HepG2 (cell line): ENCODE measurements at regions of chr1 and their contacts with region 1.

Region 1: GRCh38 chr1:32650752-32651460 is at the start of gene RBBP4:
- DNase-seq: peak; percentile 91
- ATAC-seq: peak; percentile 95
- H3K4me3 ChIP-seq: peak within 1 kb of the TSS; percentile 76 to 98 (median 91)
- H3K27ac ChIP-seq: peak within 1 kb of the TSS; percentile 100
- H3K4me1 ChIP-seq: peaks cover 59% of the 10 kb centered on the region
- H3K27me3 ChIP-seq: no peaks in the 10 kb centered on the region; a peak in 1 of 5 replicates
- CTCF ChIP-seq: no peak
- EP300 ChIP-seq: peak in 1 of 2 experiments; percentile 14; a peak in 1 of 4 replicates
- POLR2A ChIP-seq: peak in 1 of 2 experiments; percentile 79; a peak in 2 of 4 replicates
- RAD21 ChIP-seq: no peak; the same call in 1 of the 2 replicates
- total RNA-seq, gene RBBP4: 166 and 305 TPM in 2 replicates

Region 2: GRCh38 chr1:32122151-32122550 is 528.8 kb before region 1 on chr1:
- CTCF ChIA-PET with region 1: no interaction called
- POLR2A ChIA-PET with region 1: no interaction called
- in situ Hi-C with region 1: no loop called
- intact Hi-C with region 1: no loop called
- DNase-seq: no peak
- ATAC-seq: no peak
- H3K4me3 ChIP-seq: no peak overlapping the region
- H3K27ac ChIP-seq: no peak overlapping the region
- H3K4me1 ChIP-seq: peaks cover 3% of the 10 kb centered on the region
- H3K27me3 ChIP-seq: no peaks in the 10 kb centered on the region
- CTCF ChIP-seq: no peak
- EP300 ChIP-seq: no peak
- POLR2A ChIP-seq: no peak
- RAD21 ChIP-seq: no peak

Region 3: GRCh38 chr1:32394141-32394889 is 256.6 kb before region 1 on chr1 and contains the start of gene BSDC1:
- CTCF ChIA-PET with region 1: no interaction called
- POLR2A ChIA-PET with region 1: interaction called, 10 read pairs
- in situ Hi-C with region 1: no loop called
- intact Hi-C with region 1: no loop called
- DNase-seq: peak; percentile 99
- ATAC-seq: peak; percentile 98
- H3K4me3 ChIP-seq: peak within 1 kb of the TSS; percentile 77 to 99 (median 91)
- H3K27ac ChIP-seq: peak within 1 kb of the TSS; percentile 96
- H3K4me1 ChIP-seq: peaks cover 31% of the 10 kb centered on the region
- H3K27me3 ChIP-seq: no peaks in the 10 kb centered on the region; a peak in 1 of 5 replicates
- CTCF ChIP-seq: peak; percentile 31; the same call in 1 of the 2 replicates
- EP300 ChIP-seq: no peak
- POLR2A ChIP-seq: peak; percentile 77 to 96
- RAD21 ChIP-seq: no peak; the same call in 1 of the 2 replicates
- total RNA-seq, gene BSDC1: 33.2 and 40.3 TPM in 2 replicates

Region 4: GRCh38 chr1:32496127-32496526 is 154.8 kb before region 1 on chr1:
- CTCF ChIA-PET with region 1: no interaction called
- POLR2A ChIA-PET with region 1: no interaction called
- in situ Hi-C with region 1: no loop called
- intact Hi-C with region 1: no loop called
- DNase-seq: no peak
- ATAC-seq: no peak
- H3K4me3 ChIP-seq: peak overlapping the region in 1 of 3 experiments; percentile 3; a peak in 1 of 6 replicates
- H3K27ac ChIP-seq: no peak overlapping the region
- H3K4me1 ChIP-seq: peaks cover 41% of the 10 kb centered on the region
- H3K27me3 ChIP-seq: peaks cover 1 to 9% of the 10 kb centered on the region in 2 experiments; a peak in 2 of 5 replicates
- CTCF ChIP-seq: no peak
- EP300 ChIP-seq: no peak
- POLR2A ChIP-seq: no peak
- RAD21 ChIP-seq: no peak

Region 5: DNA sequence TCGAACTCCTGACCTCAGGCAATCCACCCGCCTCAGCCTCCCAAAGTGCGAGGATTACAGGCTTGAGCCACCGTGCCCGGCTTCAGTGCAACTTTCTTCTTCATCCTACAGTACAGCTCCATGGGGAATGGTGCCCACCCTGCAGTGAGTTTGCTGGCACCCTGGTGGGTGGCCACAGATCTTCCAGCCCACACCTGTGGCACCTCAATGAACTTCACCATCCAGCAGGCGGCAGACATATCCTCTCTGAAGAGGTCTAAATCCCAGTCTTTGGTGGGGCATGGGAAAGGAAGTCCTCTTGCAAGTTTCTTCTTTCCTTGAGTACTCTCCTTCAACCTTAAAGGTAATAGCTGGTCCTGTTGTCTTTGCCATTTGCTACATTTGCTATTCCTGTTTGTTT is 129.7 kb before region 1 on chr1:
- CTCF ChIA-PET with region 1: no interaction called
- POLR2A ChIA-PET with region 1: interaction called, 5 read pairs
- in situ Hi-C with region 1: no loop called
- intact Hi-C with region 1: loop called (anchors 1 kb)
- DNase-seq: no peak
- ATAC-seq: peak; percentile 70
- H3K4me3 ChIP-seq: peak overlapping the region in 1 of 3 experiments; percentile 64; a peak in 2 of 6 replicates
- H3K27ac ChIP-seq: no peak overlapping the region
- H3K4me1 ChIP-seq: peaks cover 18% of the 10 kb centered on the region; the same call in 1 of the 2 replicates
- H3K27me3 ChIP-seq: no peaks in the 10 kb centered on the region
- CTCF ChIP-seq: 0 out of 2 replicates have a peak, but pooled peaks have one; percentile 37
- EP300 ChIP-seq: no peak
- POLR2A ChIP-seq: no peak
- RAD21 ChIP-seq: no peak

Region 6: DNA sequence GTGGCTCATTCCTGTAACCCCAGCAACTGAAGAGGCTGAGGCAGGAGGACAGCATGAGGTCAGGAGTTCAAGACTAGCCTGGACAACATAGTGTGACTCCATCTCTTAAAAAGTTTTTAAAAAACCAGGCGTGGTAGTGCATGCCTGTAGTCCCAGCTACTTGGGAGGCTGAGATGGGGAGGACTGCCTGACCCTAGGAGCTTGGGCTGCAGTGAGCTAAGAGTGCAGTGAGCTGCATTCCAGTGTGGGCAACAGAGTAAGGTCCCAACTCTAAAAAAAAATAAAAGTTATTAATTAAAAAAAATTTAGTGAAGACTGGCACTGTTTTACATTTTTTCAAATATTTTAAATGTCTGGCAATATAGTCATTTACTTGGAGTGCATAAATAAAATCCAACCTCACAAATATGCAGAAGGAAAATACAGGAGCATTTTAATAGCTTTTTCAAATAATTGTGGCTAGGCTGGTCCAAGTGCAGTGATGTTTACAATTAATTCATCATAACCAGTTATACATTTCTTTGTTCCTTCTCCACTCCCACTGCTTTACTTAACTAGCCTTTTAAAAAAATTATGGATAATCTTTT is 11.3 kb before region 1 on chr1:
- CTCF ChIA-PET with region 1: no interaction called
- POLR2A ChIA-PET with region 1: interaction called, 12 read pairs
- in situ Hi-C with region 1: no loop called
- intact Hi-C with region 1: no loop called
- DNase-seq: no peak
- ATAC-seq: no peak
- H3K4me3 ChIP-seq: no peak overlapping the region
- H3K27ac ChIP-seq: no peak overlapping the region
- H3K4me1 ChIP-seq: peaks cover 6% of the 10 kb centered on the region
- H3K27me3 ChIP-seq: no peaks in the 10 kb centered on the region; a peak in 1 of 5 replicates
- CTCF ChIP-seq: no peak
- EP300 ChIP-seq: no peak
- POLR2A ChIP-seq: no peak
- RAD21 ChIP-seq: no peak

Region 7: DNA sequence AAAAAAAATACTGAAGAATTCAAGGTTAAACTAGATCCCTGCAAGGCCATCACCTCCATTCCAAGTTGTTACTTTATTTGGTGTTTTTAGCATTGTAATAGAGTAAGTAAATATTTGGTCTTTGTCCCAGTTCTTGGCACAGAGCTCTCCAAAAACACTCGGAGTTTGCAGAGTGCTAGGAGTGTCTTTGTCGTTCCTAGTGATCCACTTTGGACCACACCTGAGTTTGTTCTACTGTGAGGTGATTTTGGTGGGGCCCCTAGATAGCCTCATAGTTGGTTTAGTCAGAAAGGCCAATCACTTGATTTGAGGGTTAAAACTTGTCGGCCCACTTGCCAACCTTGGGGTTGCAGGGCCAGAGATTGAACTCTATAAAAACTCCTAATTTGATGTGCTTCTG is 26.0 kb after region 1 on chr1:
- CTCF ChIA-PET with region 1: no interaction called
- POLR2A ChIA-PET with region 1: interaction called, 11 read pairs
- in situ Hi-C with region 1: no loop called
- intact Hi-C with region 1: no loop called
- DNase-seq: no peak
- ATAC-seq: no peak
- H3K4me3 ChIP-seq: no peak overlapping the region
- H3K27ac ChIP-seq: no peak overlapping the region
- H3K4me1 ChIP-seq: no peaks in the 10 kb centered on the region
- H3K27me3 ChIP-seq: no peaks in the 10 kb centered on the region
- CTCF ChIP-seq: no peak
- EP300 ChIP-seq: no peak
- POLR2A ChIP-seq: no peak
- RAD21 ChIP-seq: no peak

Region 8: GRCh38 chr1:32695098-32695904 is 44.4 kb after region 1 on chr1:
- CTCF ChIA-PET with region 1: no interaction called
- POLR2A ChIA-PET with region 1: interaction called, 31 read pairs
- in situ Hi-C with region 1: no loop called
- intact Hi-C with region 1: loop called (anchors 2 kb)
- DNase-seq: peak; percentile 81
- ATAC-seq: peak; percentile 80
- H3K4me3 ChIP-seq: peak overlapping the region; percentile 55 to 78 (median 73)
- H3K27ac ChIP-seq: peak overlapping the region; percentile 95
- H3K4me1 ChIP-seq: peaks cover 27% of the 10 kb centered on the region
- H3K27me3 ChIP-seq: no peaks in the 10 kb centered on the region
- CTCF ChIP-seq: 0 out of 2 replicates have a peak, but pooled peaks have one; percentile 22
- EP300 ChIP-seq: no peak
- POLR2A ChIP-seq: peak; percentile 52 to 67
- RAD21 ChIP-seq: 0 out of 2 replicates have a peak, but pooled peaks have one; percentile 16